Sciatic nerve (tissue), 2 donors: ENCODE measurements at regions of chr12 and their contacts with region 1.

Region 1: DNA sequence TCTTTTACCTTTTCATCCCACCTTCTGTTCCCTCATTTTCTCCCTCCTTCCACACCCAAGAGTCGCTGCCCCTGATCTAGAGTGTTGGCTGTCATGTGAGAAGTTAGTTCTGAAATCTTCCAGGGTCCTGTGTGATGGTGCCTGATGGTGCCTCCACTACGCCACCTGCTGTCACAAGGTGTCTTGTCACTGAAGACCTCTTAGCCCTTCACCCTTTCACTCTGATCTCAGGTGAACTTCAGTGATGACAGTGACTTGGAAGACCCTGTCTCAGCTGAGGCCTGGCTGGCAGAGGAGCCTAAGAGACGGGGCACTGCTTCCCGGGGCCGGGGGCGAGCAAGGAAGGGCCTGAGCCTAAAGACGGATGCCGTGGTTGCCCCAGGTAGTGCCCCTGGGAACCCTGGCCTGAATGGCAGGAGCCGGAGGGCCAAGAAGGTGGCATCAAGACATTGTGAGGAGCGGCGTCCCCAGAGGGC is 7.6 kb upstream of the PFDN5 start:
- DNase-seq: peak; percentile 82
- ATAC-seq: peak; percentile 85

Region 2: GRCh38 chr12:53213348-53213747 is 74.4 kb before region 1 on chr12:
- intact Hi-C with region 1: loop called (anchors 2 kb)
- DNase-seq: peak; percentile 90
- ATAC-seq: peak; percentile 74